ENCODE measurements at regions of chr13 and their contacts with region 1.

Region 1: GRCh38 chr13:44759384-44760360 is 183.5 kb upstream of the TSC22D1 start:
- DNase-seq: peak; percentile 46 to 57
- H3K4me3 ChIP-seq: no peak overlapping the region
- H3K27ac ChIP-seq: peak overlapping the region; percentile 53 to 64
- H3K4me1 ChIP-seq: no peaks in the 10 kb centered on the region
- H3K27me3 ChIP-seq: no peaks in the 10 kb centered on the region
- CTCF ChIP-seq: no peak
- POLR2A ChIP-seq: no peak

Region 2: GRCh38 chr13:44879463-44880058 is 119.9 kb after region 1 on chr13:
- intact Hi-C with region 1: loop called (anchors 10 kb)
- DNase-seq: no peak
- H3K4me3 ChIP-seq: no peak overlapping the region
- H3K27ac ChIP-seq: no peak overlapping the region
- H3K4me1 ChIP-seq: no peaks in the 10 kb centered on the region
- H3K27me3 ChIP-seq: no peaks in the 10 kb centered on the region
- CTCF ChIP-seq: peak in 1 of 3 donors; percentile 19
- POLR2A ChIP-seq: no peak